ENCODE measurements at regions of chr17 and their contacts with region 1.

Region 1: DNA sequence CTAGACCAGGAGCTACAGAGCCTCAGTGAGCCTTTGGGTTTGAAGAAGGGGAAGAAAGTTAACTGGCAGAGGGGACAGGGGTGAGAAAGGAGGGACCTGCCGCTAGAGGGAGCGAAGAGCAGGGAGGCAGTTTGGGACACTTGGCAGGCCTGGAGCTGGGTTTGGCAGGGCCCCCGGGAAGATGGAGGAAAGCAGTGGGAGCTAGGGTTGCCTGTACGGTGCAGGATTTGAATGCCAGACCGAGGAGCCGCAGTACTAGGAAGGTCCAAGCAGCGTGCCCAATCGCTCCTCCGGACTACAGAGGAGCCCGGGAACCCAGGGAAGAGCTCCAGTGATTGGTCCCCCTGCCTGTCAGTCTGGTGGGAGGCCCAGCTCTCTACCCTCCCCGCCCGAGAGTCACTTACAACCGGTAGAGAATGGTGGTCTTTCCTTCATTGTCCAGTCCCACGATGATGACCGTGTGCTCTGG is 1.3 kb downstream of the ARL5C start:
- DNase-seq: peak; percentile 88
- H3K4me3 ChIP-seq: peak overlapping the region; percentile 17 to 53 (median 33)
- H3K27ac ChIP-seq: peak overlapping the region in 3 of 4 donors; percentile 4 to 47 (median 6)
- H3K4me1 ChIP-seq: peaks cover 3 to 37% (median 15%) of the 10 kb centered on the region in 4 donors
- H3K27me3 ChIP-seq: peaks cover 8% of the 10 kb centered on the region
- CTCF ChIP-seq: peak; percentile 75 to 87 (median 80)
- EP300 ChIP-seq: no peak
- POLR2A ChIP-seq: no peak

Region 2: GRCh38 chr17:38853292-38854219 is 311.2 kb before region 1 on chr17 and contains the start of gene RPL23:
- in situ Hi-C with region 1: loop called in 1 of 4 experiments (anchors 25 kb)
- intact Hi-C with region 1: no loop called
- DNase-seq: peak; percentile 96
- H3K4me3 ChIP-seq: peak within 1 kb of the TSS; percentile 39 to 57 (median 54)
- H3K27ac ChIP-seq: peak within 1 kb of the TSS; percentile 86 to 94 (median 92)
- H3K4me1 ChIP-seq: peaks cover 11 to 32% (median 25%) of the 10 kb centered on the region in 4 donors
- H3K27me3 ChIP-seq: no peaks in the 10 kb centered on the region
- CTCF ChIP-seq: no peak
- EP300 ChIP-seq: no peak
- POLR2A ChIP-seq: peak; percentile 97
- total RNA-seq, gene RPL23: 386 to 1,109 (median 710) TPM

Region 3: DNA sequence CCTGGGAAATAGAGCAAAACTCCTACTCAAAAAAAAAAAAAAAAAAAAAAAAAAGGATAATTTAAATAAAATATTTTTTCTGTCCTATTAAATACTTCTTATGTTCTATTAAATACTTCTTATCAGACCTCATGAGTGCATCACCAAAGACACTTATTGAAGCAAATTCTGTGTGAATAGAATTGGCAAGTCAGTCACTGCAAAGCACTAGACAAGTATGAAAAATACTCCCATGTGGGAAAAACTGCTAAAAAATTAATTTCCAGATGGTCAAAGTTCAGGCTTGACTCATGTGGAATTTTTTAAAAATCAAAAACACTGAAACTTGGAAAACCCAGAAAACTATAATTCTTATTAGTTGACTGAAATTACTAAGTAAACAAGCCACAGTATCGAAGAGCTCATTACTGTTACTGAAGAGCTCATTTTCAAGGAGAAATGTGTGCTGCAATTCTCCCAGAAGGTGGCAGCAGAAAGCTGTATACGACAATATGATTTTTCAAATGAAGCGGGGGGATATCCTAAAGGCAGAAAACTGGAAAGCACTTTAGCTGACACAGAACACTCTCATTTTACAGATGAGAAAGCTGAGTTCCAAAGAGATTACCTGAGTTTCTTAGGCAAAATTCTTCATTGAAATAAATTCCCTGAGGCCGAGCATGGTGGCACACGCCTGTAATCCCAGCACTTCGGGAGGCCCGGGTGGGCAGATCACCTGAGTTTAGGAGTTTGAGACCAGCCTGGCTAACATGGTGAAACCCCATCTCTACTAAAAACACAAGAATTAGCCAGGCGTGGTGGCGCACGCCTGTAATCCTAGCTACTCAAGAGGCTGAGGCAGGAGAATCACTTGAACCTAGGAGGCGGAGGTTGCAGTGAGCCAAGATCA is 181.6 kb before region 1 on chr17:
- in situ Hi-C with region 1: loop called in 3 of 4 experiments (anchors 5 to 25 kb)
- intact Hi-C with region 1: no loop called
- DNase-seq: peak; percentile 45
- H3K4me3 ChIP-seq: no peak overlapping the region
- H3K27ac ChIP-seq: no peak overlapping the region
- H3K4me1 ChIP-seq: peaks cover 0 to 3% (median 0%) of the 10 kb centered on the region in 4 donors
- H3K27me3 ChIP-seq: peaks cover 5% of the 10 kb centered on the region
- CTCF ChIP-seq: peak; percentile 72 to 83 (median 75)
- EP300 ChIP-seq: no peak
- POLR2A ChIP-seq: no peak